Activated T-helper 2 cell treated with anti-CD3 and anti-CD28 coated beads, Interferon-gamma antibody, Interleukin-2, Interleukin-4, amounts not matched to agents 10 μg/mL and 5 μg/mL and 100 μg/mL, durations not matched to agents 14 hours and 24 hours and 36 hours (primary cell): ENCODE measurements at regions of chr2 and their contacts with region 1.

Region 1: GRCh38 chr2:237858294-237859081 is 935 bp upstream of the RAMP1 start:
- DNase-seq: peak; percentile 35
- H3K4me3 Mint-ChIP-seq: peak overlapping the region; percentile 79
- H3K27ac Mint-ChIP-seq: peak overlapping the region; percentile 51
- H3K4me1 Mint-ChIP-seq: peaks cover 9% of the 10 kb centered on the region
- H3K27me3 Mint-ChIP-seq: peaks cover 55% of the 10 kb centered on the region

Region 2: DNA sequence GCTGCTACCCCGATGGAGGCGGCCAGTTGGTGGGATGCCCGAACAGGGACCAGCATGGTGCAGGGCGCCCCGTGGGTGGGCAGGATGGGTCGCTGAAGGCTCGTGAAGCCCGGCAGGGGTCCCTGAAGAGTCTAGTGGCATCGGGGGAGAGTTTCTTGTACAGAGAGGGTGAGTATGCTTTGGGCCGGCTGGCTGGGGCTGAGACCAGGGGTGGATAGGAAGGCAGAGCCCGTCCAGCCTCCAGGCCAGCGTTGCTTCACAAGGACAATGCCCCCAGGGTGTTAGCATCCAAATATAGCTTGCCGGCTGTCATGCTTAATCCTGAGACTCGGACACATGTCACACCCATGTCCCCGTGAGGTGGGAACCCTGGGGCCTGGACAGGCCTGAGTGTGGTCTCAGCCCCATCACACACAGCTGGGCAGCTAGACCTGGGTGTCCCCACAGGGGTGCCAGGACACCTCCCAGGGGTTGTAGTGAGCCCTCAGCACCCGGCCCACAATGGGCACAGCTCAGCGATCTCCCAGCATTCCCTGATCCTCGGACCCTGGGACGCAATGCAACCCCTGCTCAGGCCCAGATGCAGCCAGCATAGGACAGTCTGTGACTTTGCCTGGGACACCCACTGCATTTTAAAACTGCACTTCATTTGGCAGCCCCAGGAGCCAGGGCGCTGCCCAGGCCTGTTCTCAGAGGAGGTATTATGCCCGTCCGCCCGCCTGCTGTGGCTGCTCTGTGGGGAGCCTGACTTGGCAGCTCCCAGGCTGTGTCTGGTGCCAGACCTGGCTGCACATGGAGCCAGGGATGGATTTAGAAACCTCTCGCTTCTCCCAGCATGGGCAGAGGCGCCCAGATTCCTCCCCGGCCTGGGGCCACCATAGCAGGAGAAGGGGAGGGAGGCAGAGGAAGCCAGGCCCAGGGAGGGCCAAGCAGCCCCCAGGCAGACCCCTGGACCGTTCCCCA is 37.3 kb after region 1 on chr2:
- intact Hi-C with region 1: loop called (anchors 2 kb)
- DNase-seq: no peak
- H3K4me3 Mint-ChIP-seq: no peak overlapping the region
- H3K27ac Mint-ChIP-seq: no peak overlapping the region
- H3K4me1 Mint-ChIP-seq: peaks cover 41% of the 10 kb centered on the region
- H3K27me3 Mint-ChIP-seq: no peaks in the 10 kb centered on the region

Region 3: GRCh38 chr2:238106686-238107524 is 248.4 kb after region 1 on chr2:
- intact Hi-C with region 1: loop called (anchors 10 kb)
- DNase-seq: no peak
- H3K4me3 Mint-ChIP-seq: no peak overlapping the region
- H3K27ac Mint-ChIP-seq: no peak overlapping the region
- H3K4me1 Mint-ChIP-seq: peaks cover 3% of the 10 kb centered on the region
- H3K27me3 Mint-ChIP-seq: no peaks in the 10 kb centered on the region

Region 4: DNA sequence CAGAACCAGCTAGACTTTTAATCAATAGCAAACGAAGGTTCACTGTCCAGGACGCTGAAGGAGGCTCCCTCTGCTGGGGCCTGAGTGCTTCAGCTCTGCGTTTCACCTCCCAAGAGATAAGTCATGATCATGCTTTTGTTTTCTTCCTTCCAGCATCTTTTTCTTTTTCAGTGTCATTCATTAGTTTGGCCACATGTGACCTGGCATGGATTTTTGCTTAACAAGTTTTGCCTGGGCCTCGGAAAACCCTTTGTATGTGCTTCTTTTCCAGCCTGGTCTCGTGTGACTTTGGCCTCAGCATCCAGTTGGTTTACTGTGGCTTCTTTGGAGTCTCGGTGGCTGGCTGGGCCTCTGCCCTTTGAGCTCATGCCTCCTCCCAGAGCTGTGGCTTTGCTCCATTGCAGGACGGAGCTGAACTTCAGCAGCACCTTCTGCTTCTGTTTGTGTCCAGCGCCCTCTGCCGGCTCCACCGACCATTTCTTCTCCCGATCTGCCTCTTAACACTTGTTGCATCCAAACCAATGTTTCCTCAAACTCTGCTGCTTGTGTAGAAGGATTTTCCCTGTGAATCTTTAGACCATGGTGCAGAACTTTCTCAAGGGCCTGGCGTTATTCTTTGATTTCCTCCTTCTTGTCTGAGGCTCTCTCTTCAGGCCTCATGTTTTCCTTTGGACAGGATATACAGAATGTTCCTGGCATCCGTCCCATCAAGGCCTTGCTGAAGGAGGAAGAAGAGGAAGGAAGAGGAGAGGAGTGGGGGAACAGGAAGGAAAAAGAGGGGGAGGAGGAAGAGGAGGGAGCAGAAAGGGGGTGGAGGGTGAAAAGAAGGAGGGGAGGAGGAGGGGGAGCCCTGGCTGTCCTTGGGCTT is 404.9 kb after region 1 on chr2:
- intact Hi-C with region 1: loop called (anchors 1 kb)
- DNase-seq: peak; percentile 65
- H3K4me3 Mint-ChIP-seq: no peak overlapping the region
- H3K27ac Mint-ChIP-seq: no peak overlapping the region
- H3K4me1 Mint-ChIP-seq: peaks cover 9% of the 10 kb centered on the region
- H3K27me3 Mint-ChIP-seq: no peaks in the 10 kb centered on the region